Mucosa of descending colon (tissue), 3 donors: ENCODE measurements at regions of chr19 and their contacts with region 1.

Region 1: DNA sequence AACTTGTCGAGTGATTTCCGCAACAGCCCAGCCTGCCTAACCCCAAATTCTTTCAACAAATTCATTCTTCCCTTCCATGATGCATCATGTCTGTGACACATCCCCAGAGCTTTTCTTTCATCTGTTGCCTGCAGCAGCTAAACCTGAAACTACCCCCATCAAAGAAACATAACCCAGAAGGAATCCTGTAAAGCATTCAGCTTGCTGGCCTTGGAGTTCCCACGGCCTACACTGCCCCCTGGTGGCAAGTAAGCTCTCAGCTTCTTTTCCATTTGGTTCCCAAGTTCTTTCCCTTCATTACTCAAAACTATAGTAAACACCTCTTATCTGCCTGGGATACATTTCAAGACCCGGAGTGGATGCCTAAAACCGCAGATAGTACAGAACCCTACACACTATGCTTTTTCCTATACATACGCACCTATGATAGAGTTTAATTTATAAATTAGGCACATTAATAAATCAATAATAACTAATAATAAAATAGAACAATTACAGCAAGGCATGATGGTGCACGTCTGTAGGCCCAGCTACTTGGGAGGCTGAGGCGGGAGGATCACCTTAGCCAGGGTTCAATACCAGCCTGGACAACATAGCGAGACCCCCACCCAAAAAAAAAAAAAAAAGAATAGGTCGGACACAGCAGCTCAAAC is 7.4 kb downstream of the ETHE1 start:
- DNase-seq: peak in 2 of 3 donors; percentile 81 to 86
- ATAC-seq: peak; percentile 88
- H3K4me3 ChIP-seq: no peak overlapping the region
- H3K4me1 ChIP-seq: peaks cover 22% of the 10 kb centered on the region
- CTCF ChIP-seq: peak; percentile 68

Region 2: GRCh38 chr19:43316592-43317319 is 202.8 kb before region 1 on chr19:
- intact Hi-C with region 1: no loop called
- DNase-seq: peak in 1 of 3 donors; percentile 48
- ATAC-seq: peak; percentile 63
- H3K4me3 ChIP-seq: no peak overlapping the region
- H3K4me1 ChIP-seq: no peaks in the 10 kb centered on the region
- CTCF ChIP-seq: no peak

Region 3: GRCh38 chr19:43408043-43408442 is 111.5 kb before region 1 on chr19:
- intact Hi-C with region 1: no loop called
- DNase-seq: no peak
- ATAC-seq: no peak
- H3K4me3 ChIP-seq: no peak overlapping the region
- H3K4me1 ChIP-seq: no peaks in the 10 kb centered on the region
- CTCF ChIP-seq: no peak

Region 4: GRCh38 chr19:43446746-43447489 is 72.6 kb before region 1 on chr19:
- intact Hi-C with region 1: loop called (anchors 5 kb)
- DNase-seq: peak; percentile 76 to 87 (median 77)
- ATAC-seq: peak; percentile 94
- H3K4me3 ChIP-seq: no peak overlapping the region
- H3K4me1 ChIP-seq: no peaks in the 10 kb centered on the region
- CTCF ChIP-seq: peak; percentile 93

Region 5: DNA sequence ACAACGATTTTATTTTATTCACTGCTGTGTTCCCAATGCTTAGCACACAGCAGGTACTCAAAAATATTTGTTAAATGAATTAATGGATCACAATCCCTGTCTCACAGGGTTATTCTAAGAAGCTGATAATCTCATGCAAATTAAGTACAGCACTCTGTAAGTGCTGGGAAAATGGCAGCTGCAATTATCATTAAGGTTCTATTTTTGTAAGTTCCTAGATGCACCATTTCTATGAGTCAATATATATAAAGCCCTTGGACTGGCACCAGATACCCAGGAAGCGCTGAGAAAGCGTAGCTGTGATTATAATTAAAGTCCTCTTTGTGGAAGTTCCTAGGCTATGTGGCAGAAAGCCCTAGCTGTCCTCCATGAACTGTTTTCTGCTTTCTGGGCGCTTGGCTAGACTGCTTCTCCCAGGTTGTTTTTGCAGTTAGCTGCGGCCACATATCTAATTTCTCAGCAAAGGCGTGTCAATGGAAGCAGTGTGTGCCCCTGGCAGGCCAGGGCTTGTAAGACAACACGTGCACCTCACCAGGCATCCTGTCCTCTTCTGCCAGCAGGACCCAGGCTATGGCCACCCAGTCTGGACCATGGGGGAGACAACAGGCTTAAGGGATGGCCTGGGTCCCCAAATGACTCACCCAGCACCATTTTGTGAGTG is 87.1 kb after region 1 on chr19:
- intact Hi-C with region 1: no loop called
- DNase-seq: no peak
- ATAC-seq: no peak
- H3K4me3 ChIP-seq: no peak overlapping the region
- H3K4me1 ChIP-seq: no peaks in the 10 kb centered on the region
- CTCF ChIP-seq: no peak

Region 6: DNA sequence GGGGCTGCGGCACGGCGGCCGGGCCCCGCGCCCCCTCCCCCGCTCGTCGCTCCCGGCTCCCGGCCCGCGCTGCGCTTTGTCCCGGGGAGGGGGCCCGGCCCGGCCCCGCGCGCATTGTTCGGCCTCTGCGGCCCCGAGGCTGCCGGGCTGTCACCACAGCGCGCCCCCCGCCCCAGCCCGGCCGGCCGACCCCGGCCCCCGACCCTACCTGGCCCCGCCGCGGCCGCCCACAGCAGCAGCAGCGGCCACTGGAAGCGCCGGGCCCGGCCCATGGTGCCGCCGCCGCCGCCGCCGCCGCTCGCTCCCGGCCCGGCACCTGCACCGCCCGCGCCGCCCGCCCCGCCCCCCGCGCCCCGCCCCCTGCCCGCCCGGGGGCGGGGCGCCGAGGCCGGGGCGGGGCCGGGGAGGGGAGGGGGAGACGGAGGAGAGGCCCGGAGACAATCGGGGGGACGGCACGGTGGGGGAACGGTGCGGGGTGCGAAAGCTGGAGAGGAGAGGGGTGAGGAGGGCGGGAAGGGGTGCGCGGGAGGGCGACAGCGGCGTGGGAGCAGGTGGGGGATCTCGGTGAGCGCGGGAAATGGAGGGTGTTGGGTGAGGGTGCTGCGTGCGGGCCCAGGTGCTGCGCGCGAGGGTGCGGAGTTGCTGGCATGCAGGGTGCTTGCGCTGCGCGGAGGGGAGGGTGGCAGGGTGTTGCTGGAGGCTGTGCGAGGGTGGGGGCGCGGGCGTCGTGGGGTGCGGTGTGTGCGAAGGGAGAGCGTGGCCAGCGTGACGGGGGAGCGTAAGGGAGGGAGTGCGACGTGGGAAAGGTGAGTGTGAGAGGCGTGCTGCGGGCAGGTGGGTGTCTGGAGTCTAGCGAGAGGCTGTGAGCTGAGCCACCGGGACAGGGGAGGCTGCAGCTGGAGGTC is 120.2 kb after region 1 on chr19 and contains the start of gene CADM4:
- intact Hi-C with region 1: no loop called
- DNase-seq: peak; percentile 43 to 71 (median 65)
- ATAC-seq: peak; percentile 89
- H3K4me3 ChIP-seq: no peak within 1 kb of the TSS
- H3K4me1 ChIP-seq: peaks cover 6% of the 10 kb centered on the region
- CTCF ChIP-seq: no peak
- total RNA-seq, gene CADM4: 1.2 to 26.2 (median 3.4) TPM